Activated T-helper 1 cell treated with anti-CD3 and anti-CD28 coated beads, Interleukin-12 subunit alpha, Interleukin-12 subunit beta, Interleukin-2, Interleukin-4 antibody, amounts not matched to agents 30 ng/mL and 10 ng/mL and 1 ng/mL, durations not matched to agents 14 hours and 24 hours and 36 hours (primary cell): ENCODE measurements at regions of chr16 and their contacts with region 1.

Region 1: DNA sequence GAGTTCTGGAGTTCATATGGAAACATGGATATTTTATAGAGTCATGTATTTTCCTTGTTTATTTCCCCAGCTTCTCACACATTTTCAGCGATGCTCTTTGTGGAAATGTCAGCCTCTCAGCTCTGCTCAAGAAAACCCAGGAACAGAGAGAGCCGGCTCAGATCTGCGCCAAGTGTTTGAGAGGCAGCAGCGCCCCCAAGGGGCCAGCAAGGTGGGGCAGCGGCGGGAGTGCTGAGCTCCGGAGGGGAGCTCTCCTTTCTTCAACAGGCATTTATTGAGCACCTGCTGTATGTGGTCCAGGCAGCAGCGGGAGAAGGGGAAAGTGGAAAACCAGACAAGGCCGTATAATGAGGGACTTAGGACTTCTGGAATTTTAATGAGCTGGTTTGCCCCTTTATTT is 421.1 kb upstream of the C16orf82 start:
- DNase-seq: peak; percentile 57
- H3K4me3 Mint-ChIP-seq: no peak overlapping the region
- H3K27ac Mint-ChIP-seq: no peak overlapping the region
- H3K4me1 Mint-ChIP-seq: peaks cover 59% of the 10 kb centered on the region
- H3K27me3 Mint-ChIP-seq: peaks cover 2% of the 10 kb centered on the region

Region 2: DNA sequence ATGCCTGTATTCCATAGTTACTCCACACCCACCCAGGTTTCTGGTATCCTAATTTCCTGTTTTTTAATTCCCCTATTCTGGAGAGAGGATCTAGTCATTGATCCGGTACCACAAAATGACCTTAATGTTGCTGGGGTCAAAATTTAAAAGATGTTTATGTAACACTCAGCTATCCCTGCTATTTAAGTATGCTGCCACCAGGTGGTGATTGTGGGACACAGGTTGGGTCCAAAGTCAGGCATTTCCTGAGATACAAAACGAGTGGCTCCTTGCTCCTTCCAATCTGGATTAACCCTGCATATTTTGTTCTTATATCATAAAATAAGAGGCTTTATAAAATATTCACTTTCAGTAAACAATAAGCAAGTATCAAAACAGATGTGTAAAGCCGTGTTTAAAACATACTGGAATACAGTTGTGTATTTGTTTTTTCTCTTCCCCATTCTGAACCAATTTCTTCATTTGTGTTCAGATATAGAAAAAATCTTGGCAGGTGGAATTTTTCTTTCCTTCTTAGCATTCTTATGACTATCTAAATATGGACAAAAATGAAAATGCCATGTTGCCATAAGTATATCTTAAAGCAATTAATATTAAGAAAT is 937.5 kb before region 1 on chr16:
- intact Hi-C with region 1: loop called (anchors 5 kb)
- DNase-seq: no peak
- H3K4me3 Mint-ChIP-seq: no peak overlapping the region
- H3K27ac Mint-ChIP-seq: no peak overlapping the region
- H3K4me1 Mint-ChIP-seq: no peaks in the 10 kb centered on the region
- H3K27me3 Mint-ChIP-seq: peaks cover 11% of the 10 kb centered on the region

Region 3: DNA sequence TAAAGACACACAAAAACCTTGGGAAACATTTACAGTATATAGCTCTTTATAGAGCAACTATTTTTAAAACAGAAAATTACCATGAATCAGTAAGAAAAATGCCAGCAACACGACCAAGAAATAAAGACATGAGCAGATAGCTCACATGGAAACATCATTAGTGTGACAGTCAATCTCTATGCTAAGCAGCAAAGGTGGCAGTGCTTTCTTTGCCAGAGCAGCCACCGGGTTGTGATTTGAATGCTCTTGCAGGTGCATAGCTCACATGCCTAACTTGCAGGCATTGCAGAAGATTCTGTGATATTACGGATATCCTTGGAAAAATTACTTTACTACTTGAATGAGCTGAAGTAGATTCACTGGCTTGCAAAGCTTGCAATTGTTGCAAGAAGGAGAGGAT is 231.8 kb before region 1 on chr16:
- intact Hi-C with region 1: no loop called
- DNase-seq: no peak
- H3K4me3 Mint-ChIP-seq: no peak overlapping the region
- H3K27ac Mint-ChIP-seq: no peak overlapping the region
- H3K4me1 Mint-ChIP-seq: no peaks in the 10 kb centered on the region
- H3K27me3 Mint-ChIP-seq: peaks cover 2% of the 10 kb centered on the region

Region 4: DNA sequence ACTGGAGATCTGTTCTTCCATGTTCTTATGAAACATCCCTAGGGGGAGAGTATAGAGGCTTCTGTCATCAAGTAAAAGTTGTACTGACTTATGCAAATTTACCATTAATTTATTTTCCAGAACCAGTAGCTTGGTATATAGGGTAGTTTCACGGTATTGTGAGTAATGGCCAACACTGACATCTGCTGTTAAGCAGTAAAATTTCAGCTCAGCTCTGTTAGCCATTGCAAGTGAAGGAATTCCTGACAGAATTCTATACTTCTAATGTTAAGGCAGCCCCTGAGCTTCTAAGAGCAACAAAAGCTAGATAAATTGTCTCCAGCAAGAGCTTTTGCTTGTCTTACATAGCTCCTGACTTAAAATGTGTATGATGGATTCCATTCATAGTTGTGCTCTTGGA is 192.4 kb before region 1 on chr16:
- intact Hi-C with region 1: loop called (anchors 10 kb)
- DNase-seq: no peak
- H3K4me3 Mint-ChIP-seq: no peak overlapping the region
- H3K27ac Mint-ChIP-seq: no peak overlapping the region
- H3K4me1 Mint-ChIP-seq: no peaks in the 10 kb centered on the region
- H3K27me3 Mint-ChIP-seq: peaks cover 3% of the 10 kb centered on the region

Region 5: GRCh38 chr16:26765087-26765486 is 119.5 kb after region 1 on chr16:
- intact Hi-C with region 1: no loop called
- DNase-seq: no peak
- H3K4me3 Mint-ChIP-seq: no peak overlapping the region
- H3K27ac Mint-ChIP-seq: no peak overlapping the region
- H3K4me1 Mint-ChIP-seq: peaks cover 14% of the 10 kb centered on the region
- H3K27me3 Mint-ChIP-seq: peaks cover 4% of the 10 kb centered on the region